ENCODE measurements at regions of chr11 and their contacts with region 1.

Region 1: GRCh38 chr11:35822815-35823495 is 120.9 kb upstream of the LDLRAD3 start:
- DNase-seq: no peak
- ATAC-seq: no peak
- H3K4me3 ChIP-seq: no peak overlapping the region
- H3K27ac ChIP-seq: no peak overlapping the region
- H3K4me1 ChIP-seq: no peaks in the 10 kb centered on the region; a peak in 2 of 5 replicates
- H3K27me3 ChIP-seq: peaks cover 3 to 16% of the 10 kb centered on the region in 2 experiments; a peak in 3 of 5 replicates
- CTCF ChIP-seq: no peak
- EP300 ChIP-seq: no peak
- POLR2A ChIP-seq: no peak
- RAD21 ChIP-seq: no peak

Region 2: GRCh38 chr11:35771722-35772121 is 51.2 kb before region 1 on chr11:
- CTCF ChIA-PET with region 1: no interaction called
- POLR2A ChIA-PET with region 1: no interaction called
- in situ Hi-C with region 1: no loop called
- intact Hi-C with region 1: no loop called
- DNase-seq: no peak
- ATAC-seq: no peak
- H3K4me3 ChIP-seq: no peak overlapping the region
- H3K27ac ChIP-seq: no peak overlapping the region
- H3K4me1 ChIP-seq: no peaks in the 10 kb centered on the region
- H3K27me3 ChIP-seq: no peaks in the 10 kb centered on the region
- CTCF ChIP-seq: no peak
- EP300 ChIP-seq: no peak
- POLR2A ChIP-seq: no peak
- RAD21 ChIP-seq: no peak

Region 3: DNA sequence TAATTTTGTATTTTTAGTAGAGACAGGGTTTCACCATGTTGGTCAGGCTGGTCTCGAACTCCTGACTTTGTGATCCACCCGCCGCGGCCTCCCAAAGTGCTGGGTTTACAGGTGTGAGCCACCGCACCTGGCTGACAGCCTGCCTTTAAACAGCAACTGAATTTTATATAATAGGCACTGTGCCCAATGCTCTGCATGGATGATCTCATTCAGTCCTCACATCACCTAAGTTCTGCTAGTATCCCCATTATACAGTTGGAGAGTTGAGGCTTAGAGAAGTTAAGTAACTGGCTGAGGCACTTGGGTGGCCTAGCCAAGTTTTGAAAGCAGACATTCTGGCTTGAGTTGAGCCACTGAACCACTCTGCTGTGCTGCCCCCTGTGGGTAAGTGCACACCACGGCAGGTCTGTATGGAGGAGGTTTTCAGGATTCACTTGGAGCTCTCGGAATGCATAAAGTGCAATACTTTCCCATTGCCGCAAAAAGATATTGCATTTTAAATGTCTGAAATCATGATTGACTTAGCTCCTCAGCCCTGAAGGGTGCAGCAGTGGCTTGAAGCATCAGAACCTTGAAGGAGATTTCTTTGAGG is 233.3 kb after region 1 on chr11:
- CTCF ChIA-PET with region 1: no interaction called
- POLR2A ChIA-PET with region 1: no interaction called
- in situ Hi-C with region 1: no loop called
- intact Hi-C with region 1: loop called (anchors 1 kb)
- DNase-seq: peak; percentile 47 to 66 (median 62)
- ATAC-seq: peak; percentile 94
- H3K4me3 ChIP-seq: no peak overlapping the region
- H3K27ac ChIP-seq: no peak overlapping the region
- H3K4me1 ChIP-seq: peaks cover 0 to 6% of the 10 kb centered on the region in 2 experiments; a peak in 1 of 5 replicates
- H3K27me3 ChIP-seq: no peaks in the 10 kb centered on the region; a peak in 1 of 5 replicates
- CTCF ChIP-seq: peak; percentile 62 to 75 (median 65)
- EP300 ChIP-seq: no peak
- POLR2A ChIP-seq: no peak
- RAD21 ChIP-seq: peak; percentile 53 to 69

Region 4: DNA sequence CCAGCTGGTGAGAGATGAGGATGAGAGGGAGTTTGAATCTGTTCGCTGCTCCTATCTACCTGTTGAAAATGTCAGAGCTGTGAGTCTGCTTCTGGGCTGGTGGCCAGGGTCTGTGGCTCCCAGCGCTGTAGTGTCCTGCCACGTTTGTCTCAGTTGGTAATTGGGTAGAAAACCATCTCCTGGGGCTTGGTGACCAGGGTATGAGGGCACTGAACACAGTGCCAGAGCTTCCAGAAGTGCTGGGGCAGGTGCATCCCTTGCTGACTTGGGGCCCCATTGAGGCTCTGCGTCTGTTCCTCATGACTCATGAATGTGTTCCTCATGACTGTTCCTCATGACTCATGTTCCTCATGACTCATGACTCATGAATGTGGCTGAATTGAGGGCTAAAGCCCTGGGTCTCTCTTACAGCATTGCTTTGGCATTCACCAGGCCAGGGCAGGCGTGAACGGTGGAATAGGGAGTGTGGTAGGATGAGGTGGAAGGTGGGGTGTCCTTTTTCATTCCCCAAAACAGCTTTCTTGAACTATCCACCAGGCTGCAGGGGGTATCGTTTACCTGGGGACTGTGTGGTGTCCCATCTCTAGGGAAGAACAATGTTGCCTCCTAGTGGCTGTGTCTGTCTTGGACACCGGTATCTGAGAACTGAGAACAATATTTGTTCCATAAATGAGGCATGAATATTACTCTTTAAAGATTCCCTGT is 326.7 kb after region 1 on chr11:
- CTCF ChIA-PET with region 1: no interaction called
- POLR2A ChIA-PET with region 1: no interaction called
- in situ Hi-C with region 1: no loop called
- intact Hi-C with region 1: loop called (anchors 1 kb)
- DNase-seq: peak; percentile 84 to 90 (median 88)
- ATAC-seq: peak; percentile 98
- H3K4me3 ChIP-seq: no peak overlapping the region
- H3K27ac ChIP-seq: peak overlapping the region; percentile 82; the same call in 2 of the 3 replicates
- H3K4me1 ChIP-seq: peaks cover 12 to 18% of the 10 kb centered on the region in 2 experiments
- H3K27me3 ChIP-seq: no peaks in the 10 kb centered on the region
- CTCF ChIP-seq: peak; percentile 75 to 92 (median 88)
- EP300 ChIP-seq: peak; percentile 93
- POLR2A ChIP-seq: no peak
- RAD21 ChIP-seq: peak; percentile 88 to 94